ENCODE measurements at regions of chr13 and their contacts with region 1.

Region 1: GRCh38 chr13:27374650-27375049 is 49.8 kb upstream of the GTF3A start:
- DNase-seq: peak; percentile 87
- H3K4me3 Mint-ChIP-seq: no peak overlapping the region
- H3K27ac Mint-ChIP-seq: no peak overlapping the region
- H3K4me1 Mint-ChIP-seq: peaks cover 13% of the 10 kb centered on the region
- H3K27me3 Mint-ChIP-seq: peaks cover 13% of the 10 kb centered on the region

Region 2: DNA sequence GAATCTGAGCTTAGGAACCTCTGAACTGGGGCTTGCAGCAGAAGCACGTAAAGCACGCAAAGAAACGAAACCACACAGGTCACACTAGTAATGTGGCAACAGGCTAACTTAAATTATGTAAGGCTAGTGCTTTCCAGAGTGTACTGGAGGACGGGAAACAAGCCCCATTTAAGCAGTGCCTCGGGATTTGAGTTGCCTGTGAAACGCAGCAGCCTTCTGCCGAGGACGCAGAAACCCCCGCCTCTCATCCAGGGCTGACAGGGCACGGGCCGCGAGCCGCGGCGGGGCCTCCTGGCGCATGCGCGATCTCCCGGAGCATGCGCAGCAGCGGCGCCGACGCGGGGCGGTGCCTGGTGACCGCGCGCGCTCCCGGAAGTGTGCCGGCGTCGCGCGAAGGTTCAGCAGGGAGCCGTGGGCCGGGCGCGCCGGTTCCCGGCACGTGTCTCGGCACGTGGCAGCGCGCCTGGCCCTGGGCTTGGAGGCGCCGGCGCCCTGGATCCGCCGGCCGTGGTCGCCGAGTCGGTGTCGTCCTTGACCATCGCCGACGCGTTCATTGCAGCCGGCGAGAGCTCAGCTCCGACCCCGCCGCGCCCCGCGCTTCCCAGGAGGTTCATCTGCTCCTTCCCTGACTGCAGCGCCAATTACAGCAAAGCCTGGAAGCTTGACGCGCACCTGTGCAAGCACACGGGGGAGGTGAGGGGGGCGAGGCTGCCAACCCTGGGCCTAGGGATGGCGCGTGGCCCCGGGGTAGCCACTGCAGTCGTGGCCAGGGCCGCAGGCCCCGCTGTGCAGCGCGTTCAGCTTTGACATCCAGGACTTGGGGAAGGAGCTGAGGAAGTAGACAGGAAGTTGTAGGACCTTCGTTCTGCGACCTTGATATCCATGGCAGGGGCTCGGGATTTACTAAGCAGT is 49.9 kb after region 1 on chr13 and contains the start of gene GTF3A:
- intact Hi-C with region 1: loop called (anchors 2 kb)
- DNase-seq: peak; percentile 97
- H3K4me3 Mint-ChIP-seq: peak within 1 kb of the TSS; percentile 86
- H3K27ac Mint-ChIP-seq: peak within 1 kb of the TSS; percentile 95
- H3K4me1 Mint-ChIP-seq: peaks cover 35% of the 10 kb centered on the region
- H3K27me3 Mint-ChIP-seq: no peaks in the 10 kb centered on the region
- total RNA-seq, gene GTF3A: 279 and 284 TPM in 2 replicates

Region 3: GRCh38 chr13:27620377-27621115 is 245.9 kb after region 1 on chr13 and contains the start of gene LNX2:
- intact Hi-C with region 1: loop called (anchors 10 kb)
- DNase-seq: peak; percentile 99
- H3K4me3 Mint-ChIP-seq: peak within 1 kb of the TSS; percentile 98
- H3K27ac Mint-ChIP-seq: peak within 1 kb of the TSS; percentile 93
- H3K4me1 Mint-ChIP-seq: peaks cover 44% of the 10 kb centered on the region
- H3K27me3 Mint-ChIP-seq: no peaks in the 10 kb centered on the region
- total RNA-seq, gene LNX2: 4.1 and 4.3 TPM in 2 replicates

Region 4: DNA sequence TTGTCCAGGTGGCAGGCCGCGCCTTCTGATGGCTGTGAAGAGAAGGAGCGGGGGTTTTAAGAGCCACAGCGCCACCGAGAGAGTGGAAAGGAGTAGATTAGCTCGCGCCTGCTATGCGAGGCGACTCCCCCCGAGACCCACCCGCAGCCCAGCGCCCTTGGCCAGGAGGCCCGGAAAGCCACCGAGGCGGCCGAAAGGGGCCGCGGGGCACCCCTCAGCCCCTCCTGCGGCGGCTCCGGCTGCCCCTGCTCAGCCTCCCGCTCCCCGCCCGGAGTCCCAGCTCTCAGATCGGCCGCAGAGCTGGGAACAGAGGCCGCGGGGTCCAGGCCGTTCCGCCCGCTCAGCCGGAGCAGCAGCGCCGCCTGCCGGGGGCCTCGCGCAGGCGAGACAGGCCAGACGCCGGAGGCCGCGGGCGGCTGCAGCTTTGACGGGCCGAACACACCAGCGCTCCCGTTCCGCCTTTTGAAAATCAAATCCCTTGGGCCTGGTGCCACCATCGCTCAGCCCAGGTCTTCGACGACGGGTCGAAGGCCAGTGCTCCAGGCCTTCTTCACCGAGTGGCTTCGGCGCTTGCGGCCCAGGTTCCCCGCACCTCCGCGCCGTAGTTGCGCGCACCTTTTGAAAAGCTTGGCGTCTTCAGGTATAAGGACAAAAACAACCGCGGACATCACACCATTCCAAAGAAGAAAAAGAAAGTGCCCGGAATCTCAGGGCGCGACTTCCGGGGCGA is 579.2 kb after region 1 on chr13:
- intact Hi-C with region 1: loop called (anchors 10 kb)
- DNase-seq: peak; percentile 90
- H3K4me3 Mint-ChIP-seq: peak overlapping the region; percentile 80
- H3K27ac Mint-ChIP-seq: no peak overlapping the region
- H3K4me1 Mint-ChIP-seq: peaks cover 6% of the 10 kb centered on the region
- H3K27me3 Mint-ChIP-seq: peaks cover 63% of the 10 kb centered on the region

Region 5: GRCh38 chr13:27997904-27998522 is 623.4 kb after region 1 on chr13:
- intact Hi-C with region 1: loop called (anchors 5 kb)
- DNase-seq: peak; percentile 78
- H3K4me3 Mint-ChIP-seq: no peak overlapping the region
- H3K27ac Mint-ChIP-seq: no peak overlapping the region
- H3K4me1 Mint-ChIP-seq: no peaks in the 10 kb centered on the region
- H3K27me3 Mint-ChIP-seq: no peaks in the 10 kb centered on the region

Measured in activated CD4-positive, alpha-beta T cell treated with anti-CD3 and anti-CD28 coated beads, Interleukin-2, amount 10 ng/mL, durations not matched to agents 24 days and 14 days (primary cell).